ENCODE measurements at regions of chr12 and their contacts with region 1.

Region 1: GRCh38 chr12:76455582-76456345 is 103.8 kb downstream of the OSBPL8 start:
- DNase-seq: no peak
- ATAC-seq: peak; percentile 62
- H3K4me3 Mint-ChIP-seq: no peak overlapping the region
- H3K27ac Mint-ChIP-seq: no peak overlapping the region
- H3K4me1 Mint-ChIP-seq: peaks cover 9% of the 10 kb centered on the region
- H3K27me3 Mint-ChIP-seq: no peaks in the 10 kb centered on the region
- CTCF ChIP-seq: no peak

Region 2: GRCh38 chr12:75526655-75527511 is 928.9 kb before region 1 on chr12:
- CTCF ChIA-PET with region 1: interaction called, 22 read pairs
- POLR2A ChIA-PET with region 1: no interaction called
- intact Hi-C with region 1: loop called (anchors 1 kb)
- DNase-seq: no peak
- ATAC-seq: peak; percentile 74
- H3K4me3 Mint-ChIP-seq: no peak overlapping the region
- H3K27ac Mint-ChIP-seq: no peak overlapping the region
- H3K4me1 Mint-ChIP-seq: peaks cover 6% of the 10 kb centered on the region
- H3K27me3 Mint-ChIP-seq: peaks cover 31% of the 10 kb centered on the region
- CTCF ChIP-seq: no peak

Region 3: GRCh38 chr12:76049575-76050251 is 406.1 kb before region 1 on chr12:
- CTCF ChIA-PET with region 1: interaction called, 3 read pairs
- POLR2A ChIA-PET with region 1: no interaction called
- intact Hi-C with region 1: loop called (anchors 5 kb)
- DNase-seq: no peak
- ATAC-seq: no peak
- H3K4me3 Mint-ChIP-seq: no peak overlapping the region
- H3K27ac Mint-ChIP-seq: no peak overlapping the region
- H3K4me1 Mint-ChIP-seq: no peaks in the 10 kb centered on the region
- H3K27me3 Mint-ChIP-seq: no peaks in the 10 kb centered on the region
- CTCF ChIP-seq: no peak

Region 4: GRCh38 chr12:76432733-76433132 is 23.0 kb before region 1 on chr12:
- CTCF ChIA-PET with region 1: no interaction called
- POLR2A ChIA-PET with region 1: no interaction called
- intact Hi-C with region 1: no loop called
- DNase-seq: no peak
- ATAC-seq: no peak
- H3K4me3 Mint-ChIP-seq: no peak overlapping the region
- H3K27ac Mint-ChIP-seq: no peak overlapping the region
- H3K4me1 Mint-ChIP-seq: peaks cover 9% of the 10 kb centered on the region
- H3K27me3 Mint-ChIP-seq: no peaks in the 10 kb centered on the region
- CTCF ChIP-seq: no peak